ENCODE measurements at regions of chr11 and their contacts with region 1.

Region 1: DNA sequence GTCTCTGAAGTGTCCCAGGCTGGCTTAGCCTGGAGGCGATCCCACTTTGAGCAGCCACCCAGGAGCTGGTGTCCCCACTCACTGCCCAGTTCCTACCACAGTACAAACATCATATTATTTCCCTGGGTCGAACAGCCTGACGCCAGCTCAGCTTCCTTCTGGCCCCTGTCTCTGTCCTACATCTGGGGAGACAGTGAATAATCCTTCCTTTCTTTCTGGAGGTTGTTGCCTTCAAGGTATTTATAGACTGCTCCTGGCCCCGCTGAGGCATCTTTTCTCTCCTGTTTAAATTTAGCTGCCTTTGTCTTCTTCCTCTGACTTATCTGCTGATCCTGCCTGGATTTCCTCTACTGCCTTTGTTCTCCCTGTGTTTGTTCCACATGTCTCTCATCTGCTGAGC is 56.8 kb upstream of the LRRC55 start:
- DNase-seq: no peak
- ATAC-seq: no peak

Region 2: DNA sequence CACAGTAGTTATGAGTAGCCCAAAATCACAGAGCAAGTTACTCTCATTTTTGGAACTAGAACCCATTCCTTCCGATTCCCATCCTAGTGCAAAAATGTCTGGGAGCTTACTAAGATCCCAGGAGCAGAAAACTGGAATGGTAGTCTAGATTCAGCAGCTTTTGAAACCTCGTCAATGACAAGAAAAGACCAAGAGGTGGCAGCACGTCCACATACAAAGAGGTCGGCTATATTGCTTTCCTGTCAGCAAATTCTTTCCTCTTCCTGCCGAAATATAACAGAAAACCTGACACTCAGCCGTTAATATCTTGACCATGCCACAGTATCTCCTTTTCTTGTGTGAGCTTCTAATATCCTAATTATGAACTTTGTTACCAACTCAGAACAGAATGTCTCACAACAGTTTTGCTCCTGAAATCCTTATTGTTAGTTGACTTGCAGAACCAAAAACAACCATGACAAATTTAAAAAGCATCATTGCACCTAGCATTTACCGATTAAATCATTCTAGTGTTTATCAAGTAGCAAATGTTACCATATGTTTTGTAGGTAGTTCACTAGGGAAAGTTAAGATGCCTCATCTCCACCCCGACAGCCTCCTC is 283.6 kb before region 1 on chr11:
- intact Hi-C with region 1: loop called (anchors 5 kb)
- DNase-seq: no peak
- ATAC-seq: peak; percentile 46

Measured in Right ventricle myocardium inferior (tissue), 1 donor.